Esophagus muscularis mucosa (tissue), 4 donors: ENCODE measurements at regions of chr5 and their contacts with region 1.

Region 1: DNA sequence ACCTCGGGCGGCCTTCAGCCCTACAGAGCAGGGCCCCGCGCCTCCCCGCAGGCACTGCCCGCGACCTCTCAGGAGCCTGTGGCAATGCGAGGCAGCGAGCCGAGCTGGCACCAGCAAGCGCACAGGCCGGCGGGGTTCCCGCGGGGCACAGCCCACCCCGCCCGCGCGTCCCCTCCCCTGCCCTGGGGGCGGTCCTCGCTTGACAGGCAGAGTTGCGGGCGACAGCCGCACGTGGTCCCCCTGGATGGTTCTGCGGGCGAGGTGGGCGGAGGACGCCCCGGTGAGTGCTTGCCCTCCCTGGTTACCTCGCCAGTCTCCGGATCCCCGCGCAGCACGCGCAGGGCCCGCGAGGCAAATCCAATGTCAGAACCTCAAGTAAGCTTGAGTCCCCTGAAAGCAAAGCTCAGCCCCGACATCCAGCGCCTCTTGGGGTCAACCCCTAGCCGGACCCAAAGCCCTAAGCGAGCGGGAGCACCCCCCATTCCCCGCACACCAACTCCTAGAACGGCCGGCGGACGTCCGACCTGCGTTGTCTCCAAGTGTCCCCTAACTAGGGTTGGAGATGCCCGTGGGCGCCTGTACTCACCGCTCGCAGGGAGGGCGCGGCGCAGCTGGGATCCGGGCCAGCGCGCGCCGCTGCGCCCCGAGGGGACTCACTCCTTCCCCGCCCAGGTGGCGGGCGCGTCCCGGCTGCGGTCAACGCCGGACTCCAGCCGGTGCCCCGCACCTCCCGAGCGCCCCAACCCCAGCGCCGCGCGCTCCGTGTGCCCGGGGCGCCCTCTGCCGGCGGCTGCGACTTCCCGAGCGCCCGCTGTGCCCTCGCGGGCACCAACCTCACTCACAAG is at the start of gene DRD1:
- DNase-seq: peak; percentile 90
- H3K4me3 ChIP-seq: peak within 1 kb of the TSS; percentile 29 to 55 (median 34)
- H3K27ac ChIP-seq: no peak within 1 kb of the TSS
- H3K4me1 ChIP-seq: peaks cover 13 to 20% (median 18%) of the 10 kb centered on the region in 4 donors
- H3K27me3 ChIP-seq: peaks cover 0 to 67% (median 18%) of the 10 kb centered on the region in 4 donors
- CTCF ChIP-seq: peak; percentile 27 to 71 (median 62)
- EP300 ChIP-seq: no peak
- POLR2A ChIP-seq: no peak
- total RNA-seq, gene DRD1: 0.06 TPM in 2 of 4 donors, not detected in the others

Region 2: DNA sequence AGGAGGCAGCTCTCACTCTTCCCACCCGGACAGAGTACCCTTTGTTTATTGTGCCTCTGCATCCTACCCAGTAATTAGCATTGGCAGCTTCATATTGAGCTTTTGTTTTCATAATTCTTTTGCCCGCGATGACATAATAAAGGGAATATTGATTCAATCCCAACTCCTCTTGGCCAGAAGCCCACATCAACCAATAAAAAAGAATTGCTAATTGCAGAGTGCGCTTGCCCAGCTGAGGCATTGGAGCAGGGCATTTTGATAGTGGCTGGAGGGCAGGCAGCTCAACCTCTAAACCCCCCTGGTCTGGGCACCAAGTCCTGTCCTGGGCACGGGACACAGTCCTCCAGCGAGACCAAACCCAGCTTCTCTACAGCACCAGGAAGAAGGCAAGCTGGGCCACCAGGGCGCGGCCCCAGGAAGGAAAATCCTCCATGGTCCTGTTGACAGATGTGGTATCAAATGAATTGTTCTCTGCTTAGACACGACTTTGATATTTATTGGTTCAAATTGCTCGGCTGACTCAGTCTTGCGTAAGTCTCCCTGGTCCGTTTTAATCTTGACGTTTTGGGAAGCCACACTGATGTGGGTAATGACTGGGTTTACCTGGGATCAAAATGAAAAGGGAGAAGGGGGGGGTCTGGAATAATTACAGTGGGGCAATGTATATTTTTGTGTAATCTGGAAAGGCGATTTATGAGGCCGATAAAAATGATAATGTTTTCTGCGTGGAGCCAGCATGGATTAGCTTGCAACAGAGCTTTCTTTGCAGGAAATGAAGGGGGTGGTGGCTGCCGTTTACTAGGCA is 940.6 kb before region 1 on chr5:
- intact Hi-C with region 1: no loop called
- DNase-seq: no peak
- H3K4me3 ChIP-seq: no peak overlapping the region
- H3K27ac ChIP-seq: no peak overlapping the region
- H3K4me1 ChIP-seq: no peaks in the 10 kb centered on the region
- H3K27me3 ChIP-seq: peaks cover 0 to 15% (median 0%) of the 10 kb centered on the region in 4 donors
- CTCF ChIP-seq: no peak
- EP300 ChIP-seq: no peak
- POLR2A ChIP-seq: no peak

Region 3: DNA sequence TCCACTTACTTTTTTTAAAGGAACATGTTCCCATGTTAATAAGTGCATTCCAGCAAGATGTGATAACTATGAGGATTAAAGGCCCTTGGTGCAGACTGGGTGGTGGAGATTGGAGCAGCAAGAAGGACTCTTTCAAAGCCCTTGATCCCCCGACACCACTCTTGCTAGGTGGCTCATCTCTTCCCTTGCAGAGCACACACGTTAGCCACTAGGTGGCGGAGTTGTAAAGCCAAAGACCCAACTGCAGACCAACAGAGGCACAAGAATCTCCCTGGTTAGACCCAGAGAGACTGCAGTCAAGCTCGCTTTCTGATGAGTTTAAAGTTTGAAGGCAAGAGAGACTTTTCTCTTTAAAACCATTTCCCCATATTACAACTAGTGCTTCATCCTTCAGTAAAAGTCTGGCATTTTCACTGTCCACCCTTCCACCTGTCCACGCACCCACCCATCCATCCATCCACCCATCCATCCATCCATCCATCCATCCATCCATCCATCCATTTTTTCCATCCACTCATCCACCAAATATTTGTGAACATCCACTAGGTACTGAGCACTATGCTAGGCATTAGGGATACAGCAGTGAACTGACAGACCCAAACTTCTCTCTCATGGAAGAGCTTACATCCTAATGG is 493.0 kb before region 1 on chr5:
- intact Hi-C with region 1: loop called (anchors 2 kb)
- DNase-seq: no peak
- H3K4me3 ChIP-seq: no peak overlapping the region
- H3K27ac ChIP-seq: no peak overlapping the region
- H3K4me1 ChIP-seq: no peaks in the 10 kb centered on the region
- H3K27me3 ChIP-seq: peaks cover 0 to 57% (median 0%) of the 10 kb centered on the region in 4 donors
- CTCF ChIP-seq: peak; percentile 69 to 89 (median 72)
- EP300 ChIP-seq: no peak
- POLR2A ChIP-seq: no peak